Motor neuron (in vitro differentiated cells): ENCODE measurements at regions of chr15 and their contacts with region 1.

Region 1: DNA sequence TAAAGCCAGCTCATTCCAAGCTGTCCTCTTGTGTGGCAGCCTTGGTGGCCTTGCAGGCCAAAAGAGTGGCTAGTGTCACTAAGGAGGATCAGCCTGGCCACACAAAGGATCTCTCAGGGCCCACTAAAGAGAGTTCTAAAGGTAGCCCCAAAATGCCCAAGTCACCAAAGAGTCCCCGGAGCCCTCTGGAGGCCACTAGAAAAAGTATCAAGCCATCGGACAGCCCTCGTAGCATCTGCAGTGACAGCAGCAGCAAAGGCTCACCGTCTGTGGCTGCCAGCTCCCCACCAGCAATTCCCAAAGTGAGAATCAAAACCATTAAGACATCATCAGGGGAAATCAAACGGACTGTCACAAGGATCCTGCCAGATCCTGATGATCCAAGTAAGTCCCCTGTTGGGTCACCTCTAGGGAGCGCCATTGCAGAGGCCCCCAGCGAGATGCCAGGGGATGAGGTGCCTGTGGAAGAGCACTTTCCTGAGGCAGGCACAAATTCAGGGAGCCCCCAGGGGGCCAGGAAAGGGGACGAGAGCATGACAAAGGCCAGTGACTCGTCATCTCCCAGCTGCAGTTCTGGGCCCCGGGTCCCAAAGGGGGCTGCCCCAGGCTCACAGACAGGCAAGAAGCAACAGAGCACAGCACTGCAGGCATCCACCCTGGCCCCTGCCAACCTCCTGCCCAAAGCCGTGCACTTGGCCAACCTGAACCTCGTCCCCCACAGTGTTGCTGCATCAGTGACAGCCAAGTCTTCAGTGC is 33.5 kb upstream of the ALPK3 start:
- ATAC-seq: peak in 3 of 8 experiments; percentile 10 to 26 (median 22)
- H3K4me3 ChIP-seq: no peak overlapping the region
- H3K27ac ChIP-seq: no peak overlapping the region
- H3K4me1 ChIP-seq: no peaks in the 10 kb centered on the region

Region 2: DNA sequence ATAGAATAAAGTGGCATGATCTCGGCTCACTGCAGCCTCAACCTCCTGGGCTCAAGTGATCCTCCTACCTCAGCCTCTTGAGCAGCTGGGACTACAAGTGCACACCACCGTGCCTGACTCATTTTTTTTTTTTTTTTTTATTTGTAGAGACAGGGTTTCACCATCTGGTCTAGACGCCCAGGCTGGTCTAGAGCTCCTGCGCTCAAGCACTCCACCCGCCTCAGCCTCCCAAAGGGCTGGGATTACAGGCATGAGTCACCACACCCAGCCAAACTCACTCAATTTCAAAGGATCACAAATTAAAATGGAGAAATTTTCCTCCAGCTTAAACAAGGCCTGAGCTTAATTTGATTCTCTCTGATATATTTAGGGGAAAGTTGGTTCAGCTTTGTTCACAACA is 98.4 kb before region 1 on chr15:
- in situ Hi-C with region 1: loop called in 1 of 9 experiments (anchors 25 kb)
- ATAC-seq: peak in 3 of 8 experiments; percentile 99
- H3K4me3 ChIP-seq: no peak overlapping the region
- H3K27ac ChIP-seq: no peak overlapping the region
- H3K4me1 ChIP-seq: no peaks in the 10 kb centered on the region

Region 3: DNA sequence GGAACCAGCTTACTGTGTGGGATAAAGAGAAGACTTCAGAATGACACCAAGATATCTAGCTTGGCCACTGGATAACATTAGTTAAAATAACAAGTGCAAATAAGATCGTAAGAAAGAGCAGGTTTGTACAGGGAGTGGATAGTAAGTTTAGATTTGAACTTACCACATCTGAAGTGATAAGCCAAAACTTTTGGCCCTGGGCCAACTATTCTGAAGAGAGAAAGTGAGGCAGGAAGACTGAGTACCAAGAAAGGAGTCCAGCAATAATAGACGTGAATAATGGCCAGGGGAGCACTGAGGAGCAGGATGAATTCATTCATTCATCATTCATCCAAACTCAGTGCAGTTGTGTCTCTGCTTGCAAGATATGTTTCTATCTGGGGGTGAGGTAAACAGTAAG is 320.9 kb after region 1 on chr15:
- in situ Hi-C with region 1: no loop called
- ATAC-seq: no peak
- H3K4me3 ChIP-seq: no peak overlapping the region
- H3K27ac ChIP-seq: no peak overlapping the region
- H3K4me1 ChIP-seq: no peaks in the 10 kb centered on the region